Astrocyte of the cerebellum (primary cell): ENCODE measurements at regions of chr7 and their contacts with region 1.

Region 1: GRCh38 chr7:41508755-41509154 is 194.1 kb downstream of the INHBA start:
- DNase-seq: no peak
- H3K4me3 ChIP-seq: no peak overlapping the region
- CTCF ChIP-seq: no peak

Region 2: DNA sequence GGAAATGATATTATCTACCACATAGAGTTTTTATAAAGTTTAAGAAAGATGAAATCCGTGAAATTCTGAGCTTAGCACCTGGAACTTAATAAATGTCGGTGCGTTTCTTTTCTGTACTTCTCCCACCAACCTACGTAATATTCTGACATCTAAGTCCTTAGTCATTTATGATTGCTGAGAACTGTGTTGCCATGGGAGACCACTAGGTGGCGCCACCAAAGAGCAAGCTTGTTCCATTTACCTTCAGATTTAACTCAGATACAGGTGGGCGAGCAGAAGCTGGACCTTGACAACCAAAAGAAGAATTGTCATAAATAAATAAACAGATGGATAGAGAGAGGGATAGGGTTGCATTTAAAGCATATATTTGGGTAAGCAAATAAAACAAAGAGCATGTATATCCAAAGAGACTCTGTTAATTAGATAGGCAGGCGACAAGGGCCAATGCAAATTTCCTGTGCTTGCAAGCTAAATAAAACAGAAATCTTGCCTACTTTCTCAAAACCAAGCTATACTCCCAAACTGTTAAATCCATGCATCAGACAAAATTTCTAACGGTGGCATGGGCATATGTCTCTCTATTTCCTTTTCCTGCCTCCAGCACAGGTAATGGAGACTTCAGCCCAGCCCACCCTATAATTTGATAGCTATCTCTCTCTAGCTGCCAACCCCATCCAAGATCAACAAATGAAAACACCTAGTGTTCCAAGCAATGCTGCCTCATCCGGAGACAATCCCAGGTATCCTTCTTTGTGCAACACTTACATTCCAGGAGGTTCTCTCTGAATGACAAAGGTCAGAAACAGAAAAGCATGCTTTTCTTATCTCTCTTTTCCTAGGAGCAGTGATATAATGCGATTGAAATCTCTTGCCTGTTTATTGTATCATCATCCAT is 505.5 kb before region 1 on chr7:
- in situ Hi-C with region 1: no loop called
- DNase-seq: no peak
- H3K4me3 ChIP-seq: no peak overlapping the region
- CTCF ChIP-seq: peak; percentile 65

Region 3: DNA sequence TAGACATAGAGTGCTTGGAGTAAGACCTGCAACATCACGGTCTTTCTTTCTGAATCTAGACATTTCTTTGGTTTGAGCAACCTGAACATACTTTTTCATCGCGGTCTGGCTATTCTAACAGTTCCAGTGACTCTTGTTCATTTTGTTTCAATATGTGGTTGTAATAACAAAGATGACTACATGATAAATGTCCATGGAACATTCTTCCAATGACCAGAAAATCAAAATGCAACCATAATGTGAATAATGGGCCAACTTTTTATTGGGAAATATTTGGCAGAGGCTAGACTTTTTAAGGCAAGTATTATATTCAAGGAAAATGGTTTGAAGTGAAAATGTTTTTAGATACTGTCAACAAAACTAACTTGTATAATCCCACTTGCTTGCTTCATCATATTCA is 88.3 kb before region 1 on chr7:
- in situ Hi-C with region 1: loop called (anchors 5 kb)
- DNase-seq: peak; percentile 24
- H3K4me3 ChIP-seq: no peak overlapping the region
- CTCF ChIP-seq: no peak

Region 4: DNA sequence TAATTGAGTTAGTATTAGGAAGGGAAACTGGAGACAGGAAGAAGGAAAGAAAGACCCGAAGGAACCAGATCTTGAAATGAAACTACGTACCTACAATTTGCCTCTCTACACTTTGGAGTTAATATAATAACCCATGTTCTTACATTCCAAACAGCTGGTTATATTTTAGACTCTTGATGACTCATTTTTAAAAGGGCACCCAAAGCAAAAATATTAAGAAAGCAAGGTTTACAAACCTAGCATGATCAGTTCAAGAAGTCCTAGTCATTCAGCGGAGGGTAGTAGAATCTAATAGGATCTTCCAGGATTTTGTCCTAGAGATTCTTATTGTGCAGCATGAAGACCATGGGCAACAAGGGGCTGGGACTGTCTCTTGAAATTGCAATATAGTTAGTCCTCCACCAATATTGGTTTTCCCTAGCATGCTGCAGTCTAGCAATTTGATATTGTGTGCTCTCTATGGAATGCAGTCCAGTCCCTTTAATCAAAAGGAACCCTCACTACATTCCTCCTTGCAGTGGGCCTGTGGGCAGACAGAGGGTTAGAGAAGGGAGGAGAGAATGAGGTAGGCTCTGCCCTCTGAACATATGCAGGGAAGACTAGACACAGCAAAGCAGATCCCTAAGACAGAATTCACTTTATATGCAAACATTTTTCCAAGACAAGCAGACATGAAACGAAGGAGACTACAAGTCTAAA is 36.2 kb before region 1 on chr7:
- in situ Hi-C with region 1: loop called (anchors 5 kb)
- DNase-seq: no peak
- H3K4me3 ChIP-seq: no peak overlapping the region
- CTCF ChIP-seq: no peak

Region 5: GRCh38 chr7:41567031-41567730 is 58.4 kb after region 1 on chr7:
- in situ Hi-C with region 1: loop called (anchors 5 kb)
- DNase-seq: no peak
- H3K4me3 ChIP-seq: no peak overlapping the region
- CTCF ChIP-seq: no peak

Region 6: DNA sequence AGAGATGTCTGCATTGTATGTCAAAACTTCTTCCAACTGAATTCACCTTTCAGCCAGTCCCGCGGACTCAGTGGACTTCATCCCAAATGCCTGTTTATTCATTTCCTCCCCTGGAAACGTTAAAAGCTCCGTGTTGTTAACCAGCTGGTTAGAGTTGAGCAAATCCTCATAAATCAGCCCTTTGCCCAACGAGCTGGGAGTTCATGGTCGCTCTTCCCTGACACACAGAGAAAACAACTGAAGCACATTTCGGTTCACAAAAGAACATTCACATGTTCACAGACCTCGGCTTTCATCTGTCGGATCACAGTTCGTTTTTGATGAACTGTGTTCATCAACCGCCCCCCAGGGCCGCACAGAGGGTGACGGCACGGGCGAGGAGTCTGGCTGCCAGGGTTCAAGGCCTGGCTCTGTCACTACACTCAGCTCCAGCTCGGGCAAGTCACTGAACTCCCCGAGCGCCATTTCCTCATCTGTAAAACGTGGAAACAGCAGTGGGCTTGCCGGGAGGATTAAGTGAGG is 665.7 kb after region 1 on chr7:
- in situ Hi-C with region 1: no loop called
- DNase-seq: no peak
- H3K4me3 ChIP-seq: no peak overlapping the region
- CTCF ChIP-seq: no peak